Stomach (tissue), 19 donors: ENCODE measurements at regions of chr2 and their contacts with region 1.

Region 1: GRCh38 chr2:102155642-102156491 is 13.3 kb downstream of the IL1R1 start:
- DNase-seq: peak; percentile 40 to 60
- H3K4me3 ChIP-seq: peak overlapping the region in 1 of 4 donors; percentile 15
- H3K27ac ChIP-seq: peak overlapping the region; percentile 69 to 89 (median 78)
- H3K4me1 ChIP-seq: peaks cover 22 to 64% (median 41%) of the 10 kb centered on the region in 4 donors
- H3K27me3 ChIP-seq: no peaks in the 10 kb centered on the region
- CTCF ChIP-seq: no peak
- EP300 ChIP-seq: no peak
- POLR2A ChIP-seq: no peak

Region 2: DNA sequence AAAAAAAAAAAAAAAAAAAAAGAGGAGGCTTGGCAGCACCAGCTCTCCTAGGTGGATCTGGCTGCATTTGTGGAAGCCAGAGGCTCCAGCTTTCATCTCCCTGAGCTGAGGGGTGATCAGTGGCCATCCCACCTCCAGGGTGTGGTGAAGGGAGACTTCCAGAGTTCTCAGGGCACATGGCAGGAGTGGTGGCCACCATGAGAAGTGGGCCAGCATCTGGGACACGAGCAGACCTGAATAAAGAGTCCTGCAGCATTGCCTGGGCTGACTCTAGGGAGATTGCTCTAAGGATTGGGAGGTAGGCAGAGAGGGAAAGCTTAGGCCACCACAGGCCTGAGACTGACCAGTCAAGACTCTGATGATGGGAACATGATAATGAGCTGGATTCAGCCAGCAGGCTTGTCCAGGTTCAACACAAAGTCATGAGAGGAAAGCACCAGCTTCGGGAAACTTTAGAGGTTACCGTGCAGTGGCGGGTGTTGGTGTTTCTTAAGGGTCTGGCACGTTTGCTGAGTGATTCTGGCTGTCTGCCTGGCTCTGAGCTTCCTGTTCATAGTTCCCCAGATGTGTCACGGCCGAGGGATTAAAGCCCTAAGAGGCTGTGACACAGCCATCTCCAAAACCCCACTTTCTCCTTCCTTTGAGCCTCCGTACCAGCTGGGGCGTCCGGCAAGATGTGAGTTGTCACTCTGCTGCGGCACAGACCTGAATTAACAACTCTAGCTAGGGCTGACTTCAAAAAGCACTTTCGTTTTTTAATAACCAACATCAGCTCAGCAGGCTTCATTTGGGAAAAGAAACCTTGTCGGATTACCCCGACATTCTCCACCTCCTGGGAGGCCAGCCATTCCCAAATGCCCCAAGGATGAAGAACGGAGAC is 51.6 kb before region 1 on chr2:
- intact Hi-C with region 1: no loop called
- DNase-seq: peak; percentile 74 to 81
- H3K4me3 ChIP-seq: peak overlapping the region; percentile 24 to 40 (median 37)
- H3K27ac ChIP-seq: peak overlapping the region; percentile 50 to 86 (median 84)
- H3K4me1 ChIP-seq: peaks cover 14 to 81% (median 45%) of the 10 kb centered on the region in 4 donors
- H3K27me3 ChIP-seq: no peaks in the 10 kb centered on the region
- CTCF ChIP-seq: no peak
- EP300 ChIP-seq: no peak
- POLR2A ChIP-seq: no peak

Region 3: DNA sequence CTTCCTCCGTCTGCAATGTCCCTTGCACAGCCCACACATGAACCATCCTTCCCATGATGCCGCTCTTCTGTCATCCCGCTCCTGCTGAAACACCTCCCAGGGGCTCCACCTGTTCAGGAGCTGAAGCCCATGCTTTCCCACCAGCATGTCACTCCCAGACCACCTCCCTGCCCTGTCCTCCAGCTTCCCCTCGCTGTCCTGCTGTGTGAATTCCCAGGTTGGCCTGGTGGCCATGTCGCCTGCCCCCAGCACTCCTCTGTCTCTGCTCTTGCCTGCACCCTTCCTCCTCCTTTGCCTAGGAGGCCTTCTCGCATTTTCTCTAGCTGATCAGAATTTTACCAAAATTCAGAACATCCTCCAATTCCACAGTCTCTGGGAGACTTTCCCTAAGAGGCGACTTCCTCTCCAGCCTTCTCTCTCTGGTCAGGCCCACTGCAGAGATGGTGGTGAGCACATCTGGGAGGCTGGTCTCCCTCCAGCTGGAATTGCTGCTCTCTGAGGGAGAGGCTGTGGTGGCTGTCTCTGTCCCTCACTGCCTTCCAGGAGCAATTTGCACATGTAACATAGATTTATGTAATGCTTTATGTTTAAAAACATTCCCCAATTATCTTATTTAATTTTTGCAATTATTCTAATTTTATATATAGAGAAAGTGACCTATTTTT is 22.1 kb after region 1 on chr2:
- intact Hi-C with region 1: loop called (anchors 2 kb)
- DNase-seq: no peak
- H3K4me3 ChIP-seq: no peak overlapping the region
- H3K27ac ChIP-seq: no peak overlapping the region
- H3K4me1 ChIP-seq: peaks cover 0 to 9% (median 2%) of the 10 kb centered on the region in 4 donors
- H3K27me3 ChIP-seq: no peaks in the 10 kb centered on the region
- CTCF ChIP-seq: no peak
- EP300 ChIP-seq: no peak
- POLR2A ChIP-seq: no peak